Right cardiac atrium (tissue), 5 donors: ENCODE measurements at regions of chr20 and their contacts with region 1.

Region 1: DNA sequence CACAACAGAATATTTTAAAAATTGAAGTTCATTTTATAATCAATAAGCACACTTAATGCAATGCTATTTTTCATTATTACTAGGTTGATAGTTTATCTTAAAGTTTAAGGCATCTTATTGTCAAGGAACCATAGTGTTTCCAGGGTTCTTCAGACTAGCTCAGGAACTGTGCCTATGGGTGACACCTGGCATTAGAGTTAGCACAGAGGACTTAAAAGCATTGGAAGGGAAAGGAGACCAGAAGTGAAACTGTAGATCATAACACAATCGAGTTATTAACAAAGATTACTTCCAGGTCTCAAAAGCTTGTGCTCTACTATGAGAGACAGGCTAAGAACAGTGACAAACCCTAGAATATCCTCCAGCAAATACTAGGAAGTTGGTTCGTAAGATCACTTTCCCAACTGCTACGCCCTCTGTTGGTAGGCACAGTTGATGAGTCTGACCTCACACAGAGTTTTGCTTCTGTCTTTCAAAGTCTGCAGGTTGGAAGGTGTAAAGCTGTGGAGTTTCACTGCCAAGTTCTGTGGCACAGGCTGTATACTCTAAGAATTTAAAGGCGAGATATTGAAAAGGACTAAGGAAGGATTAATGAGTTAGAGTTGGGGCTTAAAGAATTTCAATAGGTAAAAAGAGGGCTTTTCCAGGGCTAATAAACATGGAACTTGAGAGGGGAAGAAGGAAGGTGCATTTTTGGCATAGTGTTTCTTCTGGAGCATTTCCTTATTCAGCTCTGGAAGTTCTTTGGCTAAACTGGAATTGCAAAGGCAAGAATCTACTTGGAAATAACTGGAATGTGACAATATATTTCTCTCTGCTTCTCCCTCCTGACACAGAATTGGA is 531.3 kb upstream of the JAG1 start:
- DNase-seq: peak; percentile 41 to 74 (median 48)
- ATAC-seq: peak; percentile 92 to 93
- H3K4me3 ChIP-seq: no peak overlapping the region
- H3K27ac ChIP-seq: no peak overlapping the region
- H3K4me1 ChIP-seq: no peaks in the 10 kb centered on the region
- H3K27me3 ChIP-seq: no peaks in the 10 kb centered on the region

Region 2: DNA sequence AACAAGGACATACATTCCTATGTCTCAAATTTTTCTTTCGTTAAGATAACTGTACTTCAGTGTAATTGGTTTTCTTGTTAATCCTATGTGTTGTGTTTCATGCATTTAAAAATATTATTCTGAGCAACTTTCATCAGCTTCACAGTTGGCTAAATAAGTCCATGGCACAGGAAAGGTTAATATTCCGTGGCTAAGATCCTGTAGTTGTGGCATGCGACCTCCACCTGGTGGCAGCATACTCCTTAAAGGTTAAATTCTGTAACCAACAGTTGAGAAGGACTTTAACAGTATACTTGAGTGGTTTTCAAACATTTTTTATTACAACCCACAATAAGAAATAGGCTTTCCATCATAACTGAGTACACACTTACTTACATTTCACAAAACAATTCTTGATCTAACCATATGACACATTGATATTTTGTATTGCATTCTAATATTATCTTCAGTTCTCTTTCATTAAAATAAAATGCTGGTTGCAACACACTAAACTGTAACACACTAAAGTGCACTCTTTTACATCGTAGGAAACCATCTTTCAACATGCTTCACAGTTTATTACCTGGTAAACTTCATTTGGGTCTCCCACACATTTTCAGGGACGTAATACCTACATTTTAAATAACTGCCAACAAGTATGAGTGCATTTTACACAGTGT is 651.7 kb before region 1 on chr20:
- intact Hi-C with region 1: loop called in 1 of 4 experiments (anchors 10 kb)
- DNase-seq: peak; percentile 69 to 91 (median 82)
- ATAC-seq: peak; percentile 72 to 81
- H3K4me3 ChIP-seq: no peak overlapping the region
- H3K27ac ChIP-seq: no peak overlapping the region
- H3K4me1 ChIP-seq: no peaks in the 10 kb centered on the region
- H3K27me3 ChIP-seq: no peaks in the 10 kb centered on the region

Region 3: DNA sequence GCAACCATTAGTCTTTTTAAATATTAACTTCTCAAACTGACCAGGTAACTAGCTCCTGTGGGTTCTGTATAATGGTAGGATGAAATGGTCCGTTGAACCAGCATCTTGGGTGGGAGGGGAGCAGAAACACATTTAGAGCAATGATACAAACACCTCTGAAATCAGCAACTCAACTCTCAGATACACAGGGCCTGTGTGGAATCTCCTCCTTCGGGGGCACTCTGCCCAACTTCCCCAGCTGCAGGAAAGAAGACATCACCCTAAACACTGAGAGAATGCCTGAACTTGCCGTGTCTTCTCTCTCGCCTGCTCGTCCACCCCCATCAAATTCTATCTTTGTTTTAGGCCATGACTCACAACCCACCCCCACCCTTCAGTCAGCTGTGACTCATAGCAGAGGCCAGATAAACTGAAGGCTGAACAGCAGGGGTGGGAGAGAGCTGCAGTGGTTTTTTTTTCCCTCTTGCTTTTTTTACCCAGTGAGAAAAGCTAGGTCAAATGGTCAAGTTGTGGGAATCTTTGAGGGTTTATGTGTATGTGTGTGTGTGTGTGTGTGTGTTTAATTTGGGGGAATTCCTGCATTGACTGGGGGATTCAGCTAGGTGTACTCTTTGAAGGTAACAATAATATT is 62.1 kb after region 1 on chr20:
- intact Hi-C with region 1: loop called in 1 of 4 experiments (anchors 10 kb)
- DNase-seq: peak; percentile 46 to 60 (median 48)
- ATAC-seq: peak; percentile 89 to 97
- H3K4me3 ChIP-seq: no peak overlapping the region
- H3K27ac ChIP-seq: peak overlapping the region; percentile 44
- H3K4me1 ChIP-seq: peaks cover 11% of the 10 kb centered on the region
- H3K27me3 ChIP-seq: no peaks in the 10 kb centered on the region